ENCODE measurements at regions of chr5 and their contacts with region 1.

Region 1: GRCh38 chr5:151675611-151676313 is 11.0 kb downstream of the SPARC start:
- DNase-seq: no peak
- H3K4me3 ChIP-seq: no peak overlapping the region; the same call in 1 of the 2 replicates
- CTCF ChIP-seq: no peak

Region 2: DNA sequence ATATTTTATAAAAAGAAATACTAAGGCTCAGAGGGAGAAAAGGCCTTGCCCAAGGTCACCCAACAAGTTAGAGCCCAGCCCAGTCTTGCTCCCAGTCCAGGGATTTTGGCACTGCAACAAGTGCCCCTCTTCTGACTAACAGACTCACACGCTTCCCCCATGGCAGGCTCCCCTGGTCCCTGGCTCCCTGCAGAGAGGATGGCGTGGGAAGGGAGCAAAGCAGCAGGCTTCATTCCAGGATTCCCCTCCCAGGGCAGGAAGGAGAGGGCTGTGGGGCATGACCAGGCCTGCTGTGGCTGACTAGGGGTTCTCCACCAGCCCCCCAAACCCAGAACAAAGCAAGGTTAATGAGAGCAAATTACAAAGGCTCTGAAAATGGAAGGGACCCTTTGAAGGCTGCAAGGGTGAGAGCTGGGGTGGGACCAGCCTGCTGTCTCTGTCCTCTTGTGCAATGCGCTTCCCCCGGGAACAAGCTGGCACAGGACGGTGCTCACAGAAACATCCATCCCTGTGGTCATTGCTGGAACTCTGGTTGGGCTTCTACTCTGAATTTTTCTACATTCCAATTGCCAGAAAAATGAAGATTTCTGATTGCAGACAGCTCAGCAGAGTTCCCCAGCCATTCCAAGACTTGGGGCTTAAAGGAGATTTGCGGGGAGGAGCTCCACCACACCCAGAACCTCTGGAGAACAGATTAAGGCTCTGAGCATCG is 47.5 kb before region 1 on chr5:
- CTCF ChIA-PET with region 1: no interaction called
- POLR2A ChIA-PET with region 1: no interaction called
- DNase-seq: peak; percentile 21
- H3K4me3 ChIP-seq: no peak overlapping the region
- CTCF ChIP-seq: no peak

Region 3: DNA sequence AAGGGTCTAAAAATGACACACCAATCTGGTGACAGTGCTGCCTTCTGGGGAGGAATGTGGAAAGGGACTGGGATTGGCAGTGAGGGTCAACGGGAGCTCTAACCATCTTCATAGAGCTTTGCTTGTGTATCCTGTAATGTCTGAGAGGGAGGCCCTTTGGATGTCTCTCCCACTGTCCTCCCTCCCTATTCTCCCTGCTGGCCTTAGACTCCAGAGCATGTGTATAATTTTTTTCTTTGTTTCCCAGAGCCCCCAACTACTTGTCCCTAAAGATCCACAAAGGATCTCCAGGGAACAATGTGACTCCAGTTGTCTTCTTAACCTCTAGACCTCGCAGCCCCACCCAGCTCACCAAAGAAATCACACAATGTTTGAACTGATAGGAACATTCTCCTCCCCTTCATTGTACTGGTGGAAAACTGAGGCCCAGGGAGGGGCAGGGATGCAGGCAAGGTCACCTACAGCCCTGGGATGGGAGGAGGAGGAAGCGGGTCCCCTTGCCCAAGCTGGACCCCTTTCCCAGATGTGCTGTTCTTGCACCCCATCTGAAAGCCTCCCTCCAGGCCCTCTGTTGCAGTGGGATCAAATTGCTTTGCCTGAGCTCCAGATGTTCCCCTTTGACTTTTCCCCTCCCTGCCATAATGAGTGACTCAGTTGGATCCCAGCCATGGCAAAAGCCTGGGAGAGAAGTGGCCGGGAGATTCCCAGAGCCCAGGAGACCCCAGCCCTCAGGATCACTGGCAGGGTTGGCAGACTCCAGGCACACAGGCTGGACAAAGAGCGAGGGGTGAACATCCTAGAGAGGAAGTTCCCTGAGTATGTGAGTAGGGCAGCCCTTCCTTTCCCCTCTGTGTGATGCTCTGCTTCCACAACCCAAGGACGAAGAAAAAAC is 10.8 kb before region 1 on chr5:
- CTCF ChIA-PET with region 1: interaction called, 38 read pairs
- POLR2A ChIA-PET with region 1: interaction called, 39 read pairs
- DNase-seq: no peak
- H3K4me3 ChIP-seq: no peak overlapping the region
- CTCF ChIP-seq: no peak

Region 4: GRCh38 chr5:151699071-151699901 is 23.5 kb after region 1 on chr5:
- CTCF ChIA-PET with region 1: interaction called, 3 read pairs
- POLR2A ChIA-PET with region 1: interaction called, 213 read pairs
- DNase-seq: peak; percentile 95
- H3K4me3 ChIP-seq: no peak overlapping the region
- CTCF ChIP-seq: no peak

Region 5: DNA sequence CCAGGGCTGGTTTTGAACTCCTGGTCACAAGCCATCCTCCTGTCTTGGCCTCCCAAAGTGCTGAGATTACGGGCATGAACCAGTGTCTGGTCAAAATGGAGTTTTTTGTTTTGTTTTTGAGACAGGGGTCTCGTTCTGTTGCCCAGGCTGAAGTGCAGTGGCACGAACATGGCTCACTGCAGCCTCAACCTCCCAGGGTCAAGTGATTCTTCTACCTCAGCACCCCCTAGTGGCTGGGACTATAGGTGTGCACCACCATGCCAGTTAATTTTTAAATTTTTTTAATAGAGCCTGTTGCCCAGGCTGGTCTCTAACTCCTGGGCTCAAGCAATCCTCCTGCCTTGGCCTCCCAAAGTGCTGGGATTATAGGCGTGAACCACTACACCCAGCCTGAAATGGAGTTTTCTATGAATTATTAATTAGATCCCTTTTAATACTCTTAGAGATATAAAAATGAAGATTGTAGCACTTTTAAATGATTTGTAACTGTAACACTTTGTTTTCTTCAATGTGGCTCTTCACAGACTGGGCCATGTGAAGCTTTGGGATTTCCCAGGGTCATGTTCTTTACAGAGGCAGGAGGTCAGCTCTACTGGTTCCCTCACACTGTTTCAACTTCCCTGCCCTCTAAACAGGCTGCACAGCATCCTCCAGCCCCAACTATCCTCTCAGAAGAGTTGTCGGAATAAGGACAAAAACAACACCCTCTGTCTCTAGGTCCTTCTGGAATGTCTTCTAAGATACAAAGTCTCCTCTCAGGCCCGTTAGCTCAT is 43.7 kb after region 1 on chr5:
- CTCF ChIA-PET with region 1: interaction called, 38 read pairs
- POLR2A ChIA-PET with region 1: interaction called, 94 read pairs
- DNase-seq: no peak
- H3K4me3 ChIP-seq: no peak overlapping the region
- CTCF ChIP-seq: peak; percentile 45